ENCODE measurements at regions of chr1 and their contacts with region 1.

Region 1: GRCh38 chr1:232630047-232630893 is at the start of gene SIPA1L2:
- DNase-seq: peak; percentile 66 to 95 (median 84)
- ATAC-seq: peak; percentile 96
- H3K4me3 ChIP-seq: peak within 1 kb of the TSS; percentile 58
- H3K4me3 Mint-ChIP-seq: peak within 1 kb of the TSS; percentile 82 to 91 (median 86)
- H3K27ac ChIP-seq: no peak within 1 kb of the TSS
- H3K27ac Mint-ChIP-seq: peak within 1 kb of the TSS in 2 of 9 donors; percentile 14 to 64
- H3K4me1 ChIP-seq: peaks cover 4 to 8% of the 10 kb centered on the region in 2 donors
- H3K4me1 Mint-ChIP-seq: peaks cover 14 to 30% (median 27%) of the 10 kb centered on the region in 7 donors
- H3K27me3 ChIP-seq: peaks cover 0 to 3% of the 10 kb centered on the region in 2 donors
- H3K27me3 Mint-ChIP-seq: peaks cover 11 to 59% (median 29%) of the 10 kb centered on the region in 5 donors
- total RNA-seq, gene SIPA1L2: 0.27 to 4.9 (median 0.69) TPM

Region 2: DNA sequence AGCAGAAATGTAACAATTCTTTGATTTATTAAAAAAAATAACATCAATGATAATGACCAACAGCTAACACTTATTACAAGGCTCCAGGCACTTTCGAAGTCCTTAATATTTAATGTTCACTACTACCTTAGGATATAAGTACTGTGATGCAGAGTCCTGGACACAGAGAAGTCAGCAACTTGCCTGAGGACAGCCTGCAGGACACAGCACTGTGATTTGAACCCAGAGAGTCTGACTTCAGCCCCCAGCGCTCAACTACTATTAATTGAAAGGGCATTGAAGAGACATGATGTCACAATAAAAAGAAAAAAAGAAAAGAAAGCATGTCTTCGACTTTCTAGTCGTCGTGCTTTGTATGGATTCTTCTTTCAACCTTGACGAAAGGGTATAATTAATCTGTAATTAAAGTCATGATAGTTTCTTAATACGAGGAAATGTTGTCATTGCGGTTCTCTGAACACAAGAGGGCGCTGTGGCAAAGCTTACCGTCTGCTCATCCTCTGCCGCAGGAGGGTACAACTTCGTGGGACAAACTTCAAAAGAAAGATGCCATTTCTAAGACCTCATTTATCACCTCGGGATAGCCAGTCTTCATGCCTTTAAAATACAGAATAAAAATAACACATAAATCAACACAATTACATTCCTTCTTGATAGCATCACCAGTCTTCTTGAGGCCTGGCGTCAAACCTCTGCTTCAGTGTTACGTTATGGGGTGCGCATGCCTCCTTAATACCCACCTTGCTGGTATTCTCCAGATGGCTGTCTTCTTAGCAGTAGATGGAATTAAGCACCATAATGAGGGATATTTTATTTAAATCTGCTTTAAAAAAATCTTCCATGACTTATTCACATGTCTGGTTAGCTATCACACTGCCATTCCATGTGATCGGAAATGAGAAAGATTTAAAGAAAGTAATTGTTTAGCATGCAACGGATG is 763.6 kb before region 1 on chr1:
- CTCF ChIA-PET with region 1: interaction called, 12 read pairs
- POLR2A ChIA-PET with region 1: no interaction called
- intact Hi-C with region 1: loop called (anchors 1 kb)
- DNase-seq: peak; percentile 23 to 63 (median 46)
- ATAC-seq: peak; percentile 75
- H3K4me3 ChIP-seq: no peak overlapping the region
- H3K4me3 Mint-ChIP-seq: peak overlapping the region in 6 of 10 donors; percentile 6 to 72 (median 32)
- H3K27ac ChIP-seq: no peak overlapping the region
- H3K27ac Mint-ChIP-seq: peak overlapping the region in 3 of 9 donors; percentile 13 to 77 (median 16)
- H3K4me1 ChIP-seq: no peaks in the 10 kb centered on the region
- H3K4me1 Mint-ChIP-seq: peaks cover 9 to 57% (median 53%) of the 10 kb centered on the region in 7 donors
- H3K27me3 ChIP-seq: no peaks in the 10 kb centered on the region
- H3K27me3 Mint-ChIP-seq: no peaks in the 10 kb centered on the region

Region 3: DNA sequence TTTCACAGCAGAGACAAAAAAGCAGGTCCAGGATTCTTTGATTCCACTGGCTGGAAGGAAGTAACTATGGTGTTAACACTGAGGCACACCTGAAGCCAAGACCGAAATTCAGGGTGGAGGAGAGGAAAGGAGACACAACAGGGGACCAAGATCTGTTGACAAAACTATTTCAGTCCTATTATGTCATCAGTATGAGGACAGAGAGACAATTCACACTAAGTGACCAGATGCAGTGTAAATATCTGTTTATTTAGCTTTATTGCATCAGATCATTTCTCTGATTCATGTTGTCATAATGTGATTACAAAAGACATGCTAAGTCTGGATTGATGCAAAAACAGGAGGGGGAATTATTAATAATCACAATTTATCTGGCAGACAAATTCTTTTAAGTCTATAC is 119.1 kb before region 1 on chr1:
- CTCF ChIA-PET with region 1: no interaction called
- POLR2A ChIA-PET with region 1: no interaction called
- intact Hi-C with region 1: loop called in 1 of 2 experiments (anchors 5 kb)
- DNase-seq: no peak
- ATAC-seq: no peak
- H3K4me3 ChIP-seq: no peak overlapping the region
- H3K4me3 Mint-ChIP-seq: no peak overlapping the region
- H3K27ac ChIP-seq: no peak overlapping the region
- H3K27ac Mint-ChIP-seq: no peak overlapping the region
- H3K4me1 ChIP-seq: no peaks in the 10 kb centered on the region
- H3K4me1 Mint-ChIP-seq: peaks cover 0 to 2% (median 0%) of the 10 kb centered on the region in 7 donors
- H3K27me3 ChIP-seq: no peaks in the 10 kb centered on the region
- H3K27me3 Mint-ChIP-seq: peaks cover 7 to 22% (median 11%) of the 10 kb centered on the region in 5 donors

Region 4: GRCh38 chr1:232805269-232806185 is 175.3 kb after region 1 on chr1 and contains the start of gene MAP10:
- CTCF ChIA-PET with region 1: no interaction called
- POLR2A ChIA-PET with region 1: no interaction called
- intact Hi-C with region 1: loop called in 1 of 2 experiments (anchors 5 kb)
- DNase-seq: peak; percentile 46 to 79 (median 69)
- ATAC-seq: peak; percentile 83
- H3K4me3 ChIP-seq: peak within 1 kb of the TSS; percentile 65
- H3K4me3 Mint-ChIP-seq: peak within 1 kb of the TSS; percentile 82 to 93 (median 88)
- H3K27ac ChIP-seq: peak within 1 kb of the TSS; percentile 64
- H3K27ac Mint-ChIP-seq: peak within 1 kb of the TSS; percentile 60 to 95 (median 87)
- H3K4me1 ChIP-seq: peaks cover 7 to 12% of the 10 kb centered on the region in 2 donors
- H3K4me1 Mint-ChIP-seq: peaks cover 10 to 35% (median 22%) of the 10 kb centered on the region in 7 donors
- H3K27me3 ChIP-seq: no peaks in the 10 kb centered on the region
- H3K27me3 Mint-ChIP-seq: peaks cover 0 to 12% (median 0%) of the 10 kb centered on the region in 5 donors
- total RNA-seq, gene MAP10: 1.5 to 4.5 (median 3.2) TPM

Region 5: DNA sequence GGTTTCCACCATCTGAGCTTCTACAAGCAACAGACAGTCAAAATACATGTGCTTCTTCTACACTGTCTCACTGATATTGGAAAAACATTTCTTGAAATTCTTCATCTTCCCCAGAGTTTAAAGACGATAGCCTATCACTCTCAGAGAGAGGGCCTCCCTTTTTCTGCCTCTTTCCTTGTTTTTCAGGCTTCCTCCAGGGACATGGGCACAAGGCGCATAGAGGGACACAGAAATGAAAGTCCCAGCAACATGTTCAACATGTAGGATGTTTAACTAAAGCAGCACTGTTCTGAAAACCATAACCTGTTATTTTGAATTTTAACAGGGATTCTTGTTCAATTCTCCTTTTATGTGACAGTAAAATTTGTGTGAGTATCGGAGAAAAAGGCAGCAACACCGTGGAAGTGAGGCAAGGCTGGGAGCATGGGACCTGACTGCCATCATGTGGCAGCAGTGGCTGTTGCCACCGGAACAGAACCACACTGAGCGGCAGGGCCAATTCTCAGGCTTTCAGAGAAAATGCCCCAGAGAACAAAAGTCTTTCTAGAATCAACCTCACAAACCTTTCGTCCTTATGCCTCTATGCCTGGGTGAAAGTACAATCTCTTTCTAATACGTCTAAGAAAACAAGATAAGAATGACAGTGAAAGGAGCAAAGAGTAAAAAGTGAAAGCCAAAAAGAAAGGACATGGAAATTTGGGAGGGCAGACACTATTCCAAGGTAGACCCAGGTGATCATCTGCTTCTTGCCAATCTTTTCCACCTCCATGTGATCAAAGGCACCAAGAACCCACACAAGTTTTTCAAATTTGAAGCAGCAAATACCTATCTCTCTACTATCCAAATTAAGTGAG is 610.8 kb after region 1 on chr1:
- CTCF ChIA-PET with region 1: no interaction called
- POLR2A ChIA-PET with region 1: no interaction called
- intact Hi-C with region 1: loop called in 1 of 2 experiments (anchors 1 kb)
- DNase-seq: peak in 4 of 9 donors; percentile 17 to 33 (median 22)
- ATAC-seq: peak; percentile 69
- H3K4me3 ChIP-seq: no peak overlapping the region
- H3K4me3 Mint-ChIP-seq: no peak overlapping the region
- H3K27ac ChIP-seq: no peak overlapping the region
- H3K27ac Mint-ChIP-seq: no peak overlapping the region
- H3K4me1 ChIP-seq: no peaks in the 10 kb centered on the region
- H3K4me1 Mint-ChIP-seq: peaks cover 0 to 19% (median 0%) of the 10 kb centered on the region in 7 donors
- H3K27me3 ChIP-seq: no peaks in the 10 kb centered on the region
- H3K27me3 Mint-ChIP-seq: no peaks in the 10 kb centered on the region

Measured in naive thymus-derived CD4-positive, alpha-beta T cell (primary cell).